ENCODE measurements at regions of chr3 and their contacts with region 1.

Region 1: DNA sequence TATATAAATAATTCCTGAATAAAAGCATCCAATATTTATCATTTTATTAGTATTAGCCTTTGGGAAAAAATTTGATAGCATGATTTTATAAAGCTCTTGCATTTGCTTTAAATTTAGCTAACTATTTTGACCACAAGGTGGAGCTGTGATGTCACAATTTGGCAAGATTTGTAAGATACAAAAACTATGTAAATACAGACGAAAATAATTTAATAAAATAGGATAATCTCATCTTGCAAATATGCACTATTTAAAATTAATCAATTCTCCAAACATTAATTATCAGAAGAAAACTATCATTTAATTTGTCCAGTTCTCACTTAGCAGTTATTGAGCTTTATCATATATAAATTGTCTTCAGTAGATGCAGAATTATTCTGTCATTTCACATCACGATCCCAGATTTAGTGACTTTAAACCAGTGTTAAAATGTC is 95.4 kb downstream of the PLOD2 start:
- DNase-seq: peak; percentile 80
- H3K4me3 ChIP-seq: no peak overlapping the region
- H3K27ac ChIP-seq: no peak overlapping the region
- H3K4me1 ChIP-seq: peaks cover 4% of the 10 kb centered on the region
- H3K27me3 ChIP-seq: no peaks in the 10 kb centered on the region
- CTCF ChIP-seq: peak; percentile 27 to 30
- POLR2A ChIP-seq: no peak

Region 2: DNA sequence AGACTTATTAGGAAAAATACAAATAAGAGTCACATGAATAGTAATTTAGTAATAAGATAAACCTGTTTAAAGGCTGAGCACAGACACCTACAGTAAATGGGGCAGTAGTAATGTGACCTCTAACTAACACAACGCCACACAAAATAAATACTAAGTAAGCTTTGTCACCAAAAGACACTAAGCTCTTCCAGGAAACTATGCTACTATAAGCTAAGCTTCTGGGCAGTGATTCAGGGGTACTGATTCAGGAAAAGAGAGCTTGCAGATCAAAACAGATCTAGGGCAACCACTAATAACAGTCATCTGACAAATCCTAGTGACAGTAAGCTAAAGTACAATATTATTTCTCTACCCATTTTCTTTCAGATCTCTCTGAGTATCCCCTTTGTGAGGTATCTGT is 26.6 kb after region 1 on chr3:
- CTCF ChIA-PET with region 1: interaction called, 16 read pairs
- POLR2A ChIA-PET with region 1: no interaction called
- dilution Hi-C with region 1: no loop called
- intact Hi-C with region 1: no loop called
- DNase-seq: peak; percentile 43
- H3K4me3 ChIP-seq: no peak overlapping the region
- H3K27ac ChIP-seq: no peak overlapping the region
- H3K4me1 ChIP-seq: peaks cover 13% of the 10 kb centered on the region
- H3K27me3 ChIP-seq: no peaks in the 10 kb centered on the region
- CTCF ChIP-seq: no peak
- POLR2A ChIP-seq: no peak

Region 3: GRCh38 chr3:146166450-146167225 is 101.0 kb after region 1 on chr3:
- CTCF ChIA-PET with region 1: interaction called, 85 read pairs
- POLR2A ChIA-PET with region 1: no interaction called
- dilution Hi-C with region 1: no loop called
- intact Hi-C with region 1: no loop called
- DNase-seq: peak; percentile 67
- H3K4me3 ChIP-seq: no peak overlapping the region
- H3K27ac ChIP-seq: peak overlapping the region; percentile 65
- H3K4me1 ChIP-seq: peaks cover 57% of the 10 kb centered on the region
- H3K27me3 ChIP-seq: no peaks in the 10 kb centered on the region
- CTCF ChIP-seq: no peak
- POLR2A ChIP-seq: no peak

Region 4: DNA sequence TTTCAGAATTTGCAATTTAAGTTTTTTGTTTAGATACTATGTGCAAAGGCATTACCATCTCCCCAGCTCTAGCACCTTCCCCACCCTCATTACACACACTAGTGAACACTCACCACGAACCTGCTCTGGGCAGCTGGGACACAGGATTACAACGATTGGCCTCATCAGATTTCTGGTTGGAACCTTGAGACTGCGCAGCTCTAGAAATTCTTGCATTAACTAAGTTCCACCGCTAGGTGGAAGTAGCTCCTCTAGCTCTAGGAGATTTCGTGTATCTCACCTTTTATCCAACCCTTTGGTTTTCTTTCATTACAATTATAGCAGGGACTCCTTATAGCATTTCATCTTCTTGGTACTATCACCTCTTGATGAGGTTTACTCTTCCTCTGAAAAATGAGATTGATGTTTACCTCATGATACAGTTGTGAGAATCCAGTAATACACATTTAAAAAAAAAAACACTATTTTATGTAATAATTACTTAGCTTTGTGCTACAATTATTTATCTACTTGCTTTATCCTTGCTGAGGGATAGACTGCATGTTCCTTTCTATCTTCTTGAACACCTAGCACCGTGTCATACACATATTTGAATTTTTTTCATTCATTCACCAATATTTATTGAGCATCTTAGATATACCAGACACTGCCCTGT is 124.1 kb after region 1 on chr3:
- CTCF ChIA-PET with region 1: interaction called, 170 read pairs
- POLR2A ChIA-PET with region 1: no interaction called
- dilution Hi-C with region 1: no loop called
- intact Hi-C with region 1: loop called (anchors 1 kb)
- DNase-seq: peak; percentile 70
- H3K4me3 ChIP-seq: no peak overlapping the region
- H3K27ac ChIP-seq: peak overlapping the region; percentile 43
- H3K4me1 ChIP-seq: peaks cover 21% of the 10 kb centered on the region
- H3K27me3 ChIP-seq: no peaks in the 10 kb centered on the region
- CTCF ChIP-seq: peak; percentile 62 to 68
- POLR2A ChIP-seq: no peak

Region 5: GRCh38 chr3:146577662-146578061 is 512.1 kb after region 1 on chr3:
- CTCF ChIA-PET with region 1: interaction called, 31 read pairs
- POLR2A ChIA-PET with region 1: no interaction called
- dilution Hi-C with region 1: no loop called
- intact Hi-C with region 1: loop called (anchors 1 kb)
- DNase-seq: peak; percentile 76
- H3K4me3 ChIP-seq: no peak overlapping the region
- H3K27ac ChIP-seq: no peak overlapping the region
- H3K4me1 ChIP-seq: no peaks in the 10 kb centered on the region
- H3K27me3 ChIP-seq: no peaks in the 10 kb centered on the region
- CTCF ChIP-seq: peak in 1 of 2 donors; percentile 8
- POLR2A ChIP-seq: no peak